Mammary epithelial cell (primary cell): ENCODE measurements at regions of chr6 and their contacts with region 1.

Region 1: DNA sequence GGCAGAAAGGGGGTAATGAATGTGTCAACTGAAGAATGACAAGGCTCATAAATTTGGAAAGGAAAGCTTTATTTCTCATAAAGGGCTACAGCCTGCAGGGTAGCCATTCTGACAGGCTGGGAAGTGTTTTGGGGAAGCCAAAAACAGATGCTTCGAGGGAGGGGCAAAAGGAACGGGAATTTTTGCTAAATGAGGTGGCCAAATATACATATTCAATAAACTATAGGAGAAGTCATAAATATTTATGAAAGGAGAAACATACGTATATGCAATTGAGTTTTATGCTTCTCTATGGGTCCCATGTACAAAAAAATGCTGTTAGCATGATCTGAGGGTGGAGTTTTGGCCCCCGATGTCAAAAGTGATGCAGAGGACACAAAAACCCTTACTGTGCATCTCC is 180.7 kb downstream of the FNDC1 start:
- DNase-seq: no peak
- H3K4me3 ChIP-seq: no peak overlapping the region
- H3K27ac ChIP-seq: no peak overlapping the region
- H3K4me1 ChIP-seq: no peaks in the 10 kb centered on the region
- H3K27me3 ChIP-seq: no peaks in the 10 kb centered on the region
- CTCF ChIP-seq: no peak

Region 2: DNA sequence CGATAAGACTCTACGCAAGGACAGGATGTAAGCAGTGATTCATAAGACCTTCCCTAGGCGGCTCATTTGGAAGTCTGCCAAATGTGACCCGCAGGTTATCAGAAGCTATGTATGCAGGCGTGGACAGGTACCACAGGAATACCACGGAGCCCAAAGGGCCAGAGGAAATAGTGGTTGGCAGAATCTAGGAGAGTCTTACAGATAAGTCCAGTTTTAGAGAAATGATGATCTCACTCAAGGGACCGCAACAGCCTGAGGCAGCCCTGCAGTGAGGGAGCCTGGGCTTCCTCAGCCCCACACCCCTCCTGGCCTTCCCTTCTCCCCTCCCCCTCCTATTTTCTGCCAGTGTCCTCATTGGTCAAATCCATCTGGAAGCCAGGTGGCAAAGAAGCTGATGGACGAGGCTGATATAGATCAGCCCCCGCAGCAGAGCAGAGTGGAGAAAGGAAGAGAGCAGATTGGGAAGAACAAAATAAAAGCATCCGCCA is 70.1 kb before region 1 on chr6:
- CTCF ChIA-PET with region 1: no interaction called
- dilution Hi-C with region 1: loop called (anchors 5 kb)
- in situ Hi-C with region 1: no loop called
- intact Hi-C with region 1: no loop called
- DNase-seq: peak; percentile 85
- H3K4me3 ChIP-seq: no peak overlapping the region
- H3K27ac ChIP-seq: no peak overlapping the region
- H3K4me1 ChIP-seq: peaks cover 13% of the 10 kb centered on the region
- H3K27me3 ChIP-seq: no peaks in the 10 kb centered on the region
- CTCF ChIP-seq: no peak